Cardiac septum (tissue), 1 donor: ENCODE measurements at regions of chrX and their contacts with region 1.

Region 1: DNA sequence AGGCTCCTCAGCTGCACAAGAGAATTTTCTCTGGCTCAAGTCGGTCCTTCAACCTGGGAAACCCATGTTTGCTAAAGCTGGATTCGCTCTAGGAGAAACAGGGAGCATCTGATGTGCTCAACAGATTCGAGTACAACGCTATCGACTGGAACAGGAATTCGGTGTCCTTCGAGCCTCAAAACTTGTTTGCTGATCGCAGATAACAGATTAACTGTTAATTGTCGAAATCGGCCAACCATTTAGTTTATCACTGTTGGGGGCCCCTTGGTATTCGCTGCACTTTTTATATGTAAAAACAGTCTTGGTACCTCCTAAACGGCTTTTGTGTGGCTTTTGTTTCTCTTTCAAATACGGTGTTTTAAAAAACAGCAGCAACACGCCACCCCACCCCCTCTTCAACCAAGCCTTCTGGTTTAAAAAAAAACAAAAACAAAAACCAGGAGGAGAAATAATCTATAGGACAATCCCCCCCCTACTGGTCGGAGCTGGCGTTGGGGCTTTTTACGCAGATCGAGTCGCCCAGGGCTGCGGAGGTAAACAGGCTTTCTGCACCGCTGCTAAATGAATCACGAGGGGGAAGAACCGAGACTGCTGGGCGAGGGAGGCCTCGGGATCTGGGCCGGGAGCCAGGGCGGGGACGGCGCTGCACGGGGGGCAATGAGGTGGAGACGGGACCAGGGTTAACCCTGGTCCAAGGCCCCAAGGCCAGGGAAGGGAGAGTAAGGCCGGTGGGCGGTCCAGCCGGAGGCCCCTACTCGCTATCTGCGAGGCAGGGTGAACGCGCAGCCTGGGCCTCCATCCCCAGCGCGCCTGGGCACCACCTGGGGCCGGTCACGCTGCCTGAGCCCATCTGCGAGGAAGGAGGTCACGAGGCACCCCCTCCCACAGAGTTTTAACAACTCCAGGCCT is 71.7 kb upstream of the BCOR start:
- DNase-seq: peak; percentile 81

Region 2: DNA sequence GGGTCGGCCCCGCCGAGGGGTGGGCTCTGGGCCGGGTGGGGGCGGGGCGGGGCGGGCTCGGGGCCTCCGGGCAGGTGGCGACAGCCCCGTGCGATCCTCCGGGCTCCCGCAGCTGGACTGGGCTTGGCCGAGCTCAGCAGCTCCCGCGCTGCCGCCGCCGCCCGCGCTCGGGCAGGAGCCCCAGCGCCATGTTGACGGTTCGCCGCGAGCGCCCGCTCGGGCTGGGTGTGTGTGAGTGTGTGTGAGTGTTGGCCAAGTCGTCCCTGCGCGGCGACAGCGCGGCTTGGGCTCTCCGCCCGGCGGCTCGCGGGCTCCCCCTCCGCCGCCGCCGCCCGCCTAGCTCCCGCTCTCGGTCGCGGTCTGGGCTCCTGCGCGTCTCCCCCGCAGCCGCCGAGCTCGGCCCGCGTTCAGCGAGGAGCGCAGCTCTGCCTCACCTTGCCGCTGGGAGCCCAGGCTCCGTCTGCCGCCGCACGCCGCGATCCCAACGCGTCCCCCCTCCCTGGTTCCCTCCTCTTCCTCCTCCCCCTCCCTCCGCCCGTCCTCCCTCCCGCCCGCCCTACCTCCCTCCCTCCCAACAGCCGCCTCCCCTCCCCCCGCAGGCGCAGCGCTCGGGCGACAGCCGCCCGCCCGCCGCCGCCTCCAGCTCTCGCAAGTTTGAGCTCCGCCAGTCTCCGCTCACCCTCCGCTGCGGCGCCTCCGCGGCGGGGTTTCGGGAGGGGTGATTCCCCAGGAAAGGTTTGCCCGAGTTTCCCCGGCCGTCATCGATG is 71.8 kb before region 1 on chrX and contains the start of gene BCOR:
- intact Hi-C with region 1: loop called (anchors 2 kb)
- DNase-seq: peak; percentile 84
- total RNA-seq, gene BCOR: 24.2 TPM